ENCODE measurements at regions of chr12 and their contacts with region 1.

Region 1: GRCh38 chr12:10331642-10332239 is 24.1 kb downstream of the KLRD1 start:
- DNase-seq: no peak
- H3K4me3 ChIP-seq: no peak overlapping the region
- H3K27ac ChIP-seq: no peak overlapping the region
- H3K4me1 ChIP-seq: no peaks in the 10 kb centered on the region
- H3K27me3 ChIP-seq: no peaks in the 10 kb centered on the region
- CTCF ChIP-seq: peak; percentile 21 to 74 (median 59)
- POLR2A ChIP-seq: no peak

Region 2: GRCh38 chr12:9940375-9940774 is 391.4 kb before region 1 on chr12:
- intact Hi-C with region 1: no loop called
- DNase-seq: no peak
- H3K4me3 ChIP-seq: no peak overlapping the region
- H3K27ac ChIP-seq: no peak overlapping the region
- H3K4me1 ChIP-seq: peaks cover 0 to 32% (median 10%) of the 10 kb centered on the region in 6 donors
- H3K27me3 ChIP-seq: peaks cover 0 to 9% (median 0%) of the 10 kb centered on the region in 7 donors
- CTCF ChIP-seq: peak in 5 of 11 experiments; percentile 13 to 38 (median 22)
- POLR2A ChIP-seq: no peak

Region 3: GRCh38 chr12:10364815-10365622 is 33.3 kb after region 1 on chr12:
- intact Hi-C with region 1: no loop called
- DNase-seq: peak; percentile 77
- H3K4me3 ChIP-seq: peak overlapping the region; percentile 48 to 80 (median 60)
- H3K27ac ChIP-seq: peak overlapping the region; percentile 79 to 98 (median 94)
- H3K4me1 ChIP-seq: peaks cover 8 to 68% (median 28%) of the 10 kb centered on the region in 6 donors
- H3K27me3 ChIP-seq: no peaks in the 10 kb centered on the region
- CTCF ChIP-seq: no peak
- POLR2A ChIP-seq: no peak

Region 4: GRCh38 chr12:10562306-10562933 is 230.7 kb after region 1 on chr12:
- intact Hi-C with region 1: loop called (anchors 5 kb)
- DNase-seq: no peak
- H3K4me3 ChIP-seq: no peak overlapping the region
- H3K27ac ChIP-seq: no peak overlapping the region
- H3K4me1 ChIP-seq: peaks cover 0 to 6% (median 0%) of the 10 kb centered on the region in 6 donors
- H3K27me3 ChIP-seq: no peaks in the 10 kb centered on the region
- CTCF ChIP-seq: peak; percentile 42 to 79 (median 70)
- POLR2A ChIP-seq: no peak

Region 5: GRCh38 chr12:10673660-10674384 is 342.1 kb after region 1 on chr12 and contains the start of gene STYK1:
- intact Hi-C with region 1: loop called (anchors 5 kb)
- DNase-seq: peak; percentile 87
- H3K4me3 ChIP-seq: peak within 1 kb of the TSS; percentile 4 to 72 (median 42)
- H3K27ac ChIP-seq: peak within 1 kb of the TSS in 4 of 8 donors; percentile 14 to 77 (median 54)
- H3K4me1 ChIP-seq: peaks cover 2 to 42% (median 17%) of the 10 kb centered on the region in 6 donors
- H3K27me3 ChIP-seq: peaks cover 0 to 62% (median 9%) of the 10 kb centered on the region in 7 donors
- CTCF ChIP-seq: peak in 10 of 11 experiments; percentile 64 to 84 (median 77)
- POLR2A ChIP-seq: no peak
- total RNA-seq, gene STYK1: 0.49 to 2.4 (median 1.2) TPM